A549 (cell line): ENCODE measurements at regions of chr9 and their contacts with region 1.

Region 1: GRCh38 chr9:120856700-120857099 is 14.0 kb upstream of the PSMD5 start:
- DNase-seq: no peak
- ATAC-seq: no peak
- H3K4me3 ChIP-seq: no peak overlapping the region
- H3K27ac ChIP-seq: no peak overlapping the region
- H3K4me1 ChIP-seq: no peaks in the 10 kb centered on the region
- CTCF ChIP-seq: no peak
- EP300 ChIP-seq: no peak
- POLR2A ChIP-seq: no peak
- RAD21 ChIP-seq: no peak

Region 2: GRCh38 chr9:120878188-120879130 is 21.8 kb after region 1 on chr9:
- CTCF ChIA-PET with region 1: no interaction called
- POLR2A ChIA-PET with region 1: no interaction called
- DNase-seq: no peak
- ATAC-seq: no peak
- H3K4me3 ChIP-seq: peak overlapping the region; percentile 86
- H3K27ac ChIP-seq: peak overlapping the region; percentile 99
- H3K4me1 ChIP-seq: peaks cover 38% of the 10 kb centered on the region
- CTCF ChIP-seq: no peak
- EP300 ChIP-seq: no peak
- POLR2A ChIP-seq: no peak
- RAD21 ChIP-seq: no peak

Region 3: GRCh38 chr9:120921661-120922181 is 65.0 kb after region 1 on chr9:
- CTCF ChIA-PET with region 1: no interaction called
- POLR2A ChIA-PET with region 1: interaction called, 10 read pairs
- DNase-seq: no peak
- ATAC-seq: no peak
- H3K4me3 ChIP-seq: no peak overlapping the region
- H3K27ac ChIP-seq: no peak overlapping the region
- H3K4me1 ChIP-seq: peaks cover 15% of the 10 kb centered on the region
- CTCF ChIP-seq: no peak
- EP300 ChIP-seq: no peak
- POLR2A ChIP-seq: no peak
- RAD21 ChIP-seq: no peak